ENCODE measurements at regions of chr11 and their contacts with region 1.

Region 1: GRCh38 chr11:29432719-29433325 is 584.0 kb downstream of the KCNA4 start:
- DNase-seq: peak; percentile 47
- H3K4me3 Mint-ChIP-seq: no peak overlapping the region
- H3K27ac Mint-ChIP-seq: no peak overlapping the region
- H3K4me1 Mint-ChIP-seq: peaks cover 8% of the 10 kb centered on the region
- H3K27me3 Mint-ChIP-seq: no peaks in the 10 kb centered on the region
- CTCF ChIP-seq: peak; percentile 69

Region 2: DNA sequence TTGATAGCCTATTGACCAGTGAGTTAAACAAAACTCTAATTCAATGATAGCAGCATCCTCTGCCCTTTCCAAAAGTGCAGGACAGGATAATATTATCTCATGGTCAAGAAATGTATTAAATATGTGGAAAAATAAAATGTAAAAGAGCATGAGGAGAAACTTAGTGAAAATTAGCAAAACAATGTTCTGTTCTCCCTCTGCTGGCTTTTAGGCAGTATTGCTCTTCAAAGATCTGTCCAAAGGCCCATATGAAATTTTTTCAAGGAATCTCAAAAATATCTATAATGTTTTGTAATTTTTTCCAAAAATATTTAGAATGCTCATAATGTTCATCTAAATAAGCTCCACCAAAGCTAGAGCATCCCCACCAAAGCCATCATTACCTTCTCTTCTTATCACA is 881.8 kb after region 1 on chr11:
- CTCF ChIA-PET with region 1: interaction called, 38 read pairs
- POLR2A ChIA-PET with region 1: no interaction called
- intact Hi-C with region 1: loop called (anchors 1 kb)
- DNase-seq: no peak
- H3K4me3 Mint-ChIP-seq: no peak overlapping the region
- H3K27ac Mint-ChIP-seq: no peak overlapping the region
- H3K4me1 Mint-ChIP-seq: no peaks in the 10 kb centered on the region
- H3K27me3 Mint-ChIP-seq: peaks cover 12% of the 10 kb centered on the region
- CTCF ChIP-seq: peak; percentile 63

Region 3: GRCh38 chr11:30333405-30333804 is 900.6 kb after region 1 on chr11:
- CTCF ChIA-PET with region 1: interaction called, 22 read pairs
- POLR2A ChIA-PET with region 1: no interaction called
- intact Hi-C with region 1: no loop called
- DNase-seq: peak; percentile 25
- H3K4me3 Mint-ChIP-seq: no peak overlapping the region
- H3K27ac Mint-ChIP-seq: no peak overlapping the region
- H3K4me1 Mint-ChIP-seq: peaks cover 10% of the 10 kb centered on the region
- H3K27me3 Mint-ChIP-seq: no peaks in the 10 kb centered on the region
- CTCF ChIP-seq: peak; percentile 34